ENCODE measurements at regions of chr3 and their contacts with region 1.

Region 1: DNA sequence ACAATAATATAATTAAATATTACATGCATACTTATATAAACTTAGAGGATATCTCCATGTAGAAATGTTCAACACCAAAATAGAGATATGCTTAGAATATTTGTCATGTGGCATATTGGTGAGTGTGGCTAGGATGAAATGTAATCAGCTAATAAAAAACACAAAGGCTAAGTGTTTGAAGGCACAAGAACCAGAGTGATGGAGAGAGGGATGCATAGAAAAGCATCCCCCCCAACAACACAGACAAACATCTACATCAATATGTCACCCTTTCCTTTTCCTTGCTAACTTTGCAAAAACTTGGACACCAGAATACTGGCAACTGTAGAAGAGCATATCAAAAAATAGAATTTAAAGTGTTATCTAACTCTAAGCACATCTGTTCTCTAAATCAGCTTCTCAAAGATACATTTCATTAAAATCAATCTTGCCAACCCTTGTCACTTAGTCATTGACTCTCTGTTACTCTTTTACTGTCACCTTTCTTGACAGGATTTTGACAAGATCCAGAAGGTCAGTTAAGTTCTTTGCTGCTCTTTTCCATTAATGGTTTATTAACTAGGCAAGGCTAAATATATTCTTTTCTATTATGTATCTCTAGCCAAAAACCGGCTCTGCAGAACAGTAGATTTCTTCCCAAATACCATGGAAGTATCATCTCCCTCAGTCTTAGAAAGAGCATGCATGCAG is 695.9 kb downstream of the OTOL1 start:
- DNase-seq: no peak
- ATAC-seq: peak in 1 of 8 donors; percentile 58
- H3K4me3 ChIP-seq: no peak overlapping the region
- H3K27ac ChIP-seq: no peak overlapping the region
- H3K4me1 ChIP-seq: peaks cover 0 to 8% (median 0%) of the 10 kb centered on the region in 9 donors
- H3K27me3 ChIP-seq: no peaks in the 10 kb centered on the region
- CTCF ChIP-seq: no peak

Region 2: DNA sequence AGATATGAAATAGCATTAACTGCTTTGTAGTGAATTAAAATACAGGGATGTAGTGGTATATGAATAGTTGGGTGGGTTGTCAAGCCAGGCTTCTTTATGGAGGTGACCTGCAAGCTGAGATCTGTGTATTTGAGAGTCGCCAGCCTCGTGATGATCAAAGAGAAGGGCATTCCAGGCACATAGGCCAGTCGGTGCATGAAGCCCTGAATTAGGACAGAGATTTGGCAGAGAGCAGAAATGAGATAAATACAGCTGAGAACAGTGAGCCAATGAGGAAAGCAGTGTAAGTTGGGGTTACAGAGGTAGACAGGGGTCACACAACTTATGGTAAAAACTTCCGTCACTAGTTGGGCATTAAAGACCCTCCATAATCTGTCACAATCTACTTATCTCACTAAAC is 54.0 kb before region 1 on chr3:
- intact Hi-C with region 1: loop called in 1 of 10 experiments (anchors 5 kb)
- DNase-seq: peak in 1 of 2 donors; percentile 32
- ATAC-seq: peak in 7 of 8 donors; percentile 49 to 98 (median 80)
- H3K4me3 ChIP-seq: no peak overlapping the region
- H3K27ac ChIP-seq: peak overlapping the region in 5 of 10 donors; percentile 30 to 68 (median 62)
- H3K4me1 ChIP-seq: peaks cover 0 to 3% (median 0%) of the 10 kb centered on the region in 9 donors
- H3K27me3 ChIP-seq: no peaks in the 10 kb centered on the region
- CTCF ChIP-seq: no peak

Region 3: GRCh38 chr3:162699291-162699690 is 506.8 kb after region 1 on chr3:
- intact Hi-C with region 1: no loop called
- DNase-seq: no peak
- ATAC-seq: no peak
- H3K4me3 ChIP-seq: no peak overlapping the region
- H3K27ac ChIP-seq: no peak overlapping the region
- H3K4me1 ChIP-seq: no peaks in the 10 kb centered on the region
- H3K27me3 ChIP-seq: no peaks in the 10 kb centered on the region
- CTCF ChIP-seq: no peak